Breast epithelium (tissue), 4 donors: ENCODE measurements at regions of chr12 and their contacts with region 1.

Region 1: GRCh38 chr12:132713123-132713522 is 2.5 kb downstream of the PGAM5 start:
- DNase-seq: no peak
- H3K4me3 ChIP-seq: no peak overlapping the region
- H3K27ac ChIP-seq: no peak overlapping the region
- H3K4me1 ChIP-seq: peaks cover 7 to 13% of the 10 kb centered on the region in 2 donors
- H3K27me3 ChIP-seq: no peaks in the 10 kb centered on the region
- CTCF ChIP-seq: no peak
- POLR2A ChIP-seq: no peak

Region 2: DNA sequence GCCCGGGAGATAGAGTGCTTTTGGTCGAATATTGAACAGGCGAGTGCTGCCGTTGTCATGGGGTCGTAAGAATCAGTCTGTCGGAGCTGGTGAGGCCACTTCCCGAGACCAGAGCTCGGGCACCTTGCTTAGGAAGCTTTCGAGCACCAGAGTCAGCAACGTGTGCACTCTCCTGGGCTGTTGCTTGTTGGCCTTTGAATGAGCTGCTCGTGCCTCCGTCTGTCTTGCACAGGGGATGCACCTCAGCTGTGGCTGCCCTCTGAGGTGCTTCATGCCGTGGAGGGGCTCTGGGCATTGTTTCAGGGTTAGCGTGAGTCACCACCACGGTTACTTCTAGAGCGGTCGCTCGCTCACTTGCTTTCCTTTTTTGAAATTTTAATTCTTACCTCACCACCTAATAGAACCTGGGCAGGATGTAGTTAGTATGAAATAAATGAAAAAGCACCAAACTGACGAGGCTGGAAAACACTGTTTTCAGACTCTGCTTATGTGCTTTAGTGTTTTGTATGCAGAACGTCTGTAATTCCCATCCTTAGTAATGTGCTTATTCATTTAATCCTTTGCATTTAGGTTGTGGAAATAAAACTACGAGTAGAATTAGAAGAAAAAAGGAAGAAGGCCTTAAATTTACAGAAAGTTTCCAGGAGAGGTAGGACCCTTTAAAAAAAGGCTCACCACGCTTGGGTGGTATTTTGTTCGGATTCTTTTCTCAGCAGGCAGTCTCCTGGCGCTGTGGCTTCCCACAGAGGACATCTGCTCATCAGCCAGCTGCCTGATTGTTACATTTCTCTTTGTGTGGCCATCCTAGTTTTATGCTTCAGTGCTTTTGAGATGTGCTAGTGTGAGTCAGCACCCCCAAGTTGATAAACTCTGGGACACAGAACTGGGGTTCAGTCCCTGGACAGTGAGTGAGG is 722.8 kb before region 1 on chr12:
- intact Hi-C with region 1: no loop called
- DNase-seq: no peak
- H3K4me3 ChIP-seq: no peak overlapping the region
- H3K27ac ChIP-seq: no peak overlapping the region
- H3K4me1 ChIP-seq: no peaks in the 10 kb centered on the region
- H3K27me3 ChIP-seq: no peaks in the 10 kb centered on the region
- CTCF ChIP-seq: no peak
- POLR2A ChIP-seq: no peak

Region 3: GRCh38 chr12:132702640-132703039 is 10.5 kb before region 1 on chr12:
- intact Hi-C with region 1: loop called (anchors 1 kb)
- DNase-seq: no peak
- H3K4me3 ChIP-seq: no peak overlapping the region
- H3K27ac ChIP-seq: no peak overlapping the region
- H3K4me1 ChIP-seq: no peaks in the 10 kb centered on the region
- H3K27me3 ChIP-seq: no peaks in the 10 kb centered on the region
- CTCF ChIP-seq: no peak
- POLR2A ChIP-seq: no peak